GM10248 (cell line): ENCODE measurements at regions of chr3 and their contacts with region 1.

Region 1: GRCh38 chr3:49839193-49839809 is 17.1 kb downstream of the TRAIP start:
- DNase-seq: peak; percentile 82
- CTCF ChIP-seq: peak; percentile 92

Region 2: GRCh38 chr3:49703443-49703927 is 135.8 kb before region 1 on chr3:
- CTCF ChIA-PET with region 1: interaction called, 23 read pairs
- POLR2A ChIA-PET with region 1: no interaction called
- DNase-seq: peak; percentile 90
- CTCF ChIP-seq: peak; percentile 85

Region 3: DNA sequence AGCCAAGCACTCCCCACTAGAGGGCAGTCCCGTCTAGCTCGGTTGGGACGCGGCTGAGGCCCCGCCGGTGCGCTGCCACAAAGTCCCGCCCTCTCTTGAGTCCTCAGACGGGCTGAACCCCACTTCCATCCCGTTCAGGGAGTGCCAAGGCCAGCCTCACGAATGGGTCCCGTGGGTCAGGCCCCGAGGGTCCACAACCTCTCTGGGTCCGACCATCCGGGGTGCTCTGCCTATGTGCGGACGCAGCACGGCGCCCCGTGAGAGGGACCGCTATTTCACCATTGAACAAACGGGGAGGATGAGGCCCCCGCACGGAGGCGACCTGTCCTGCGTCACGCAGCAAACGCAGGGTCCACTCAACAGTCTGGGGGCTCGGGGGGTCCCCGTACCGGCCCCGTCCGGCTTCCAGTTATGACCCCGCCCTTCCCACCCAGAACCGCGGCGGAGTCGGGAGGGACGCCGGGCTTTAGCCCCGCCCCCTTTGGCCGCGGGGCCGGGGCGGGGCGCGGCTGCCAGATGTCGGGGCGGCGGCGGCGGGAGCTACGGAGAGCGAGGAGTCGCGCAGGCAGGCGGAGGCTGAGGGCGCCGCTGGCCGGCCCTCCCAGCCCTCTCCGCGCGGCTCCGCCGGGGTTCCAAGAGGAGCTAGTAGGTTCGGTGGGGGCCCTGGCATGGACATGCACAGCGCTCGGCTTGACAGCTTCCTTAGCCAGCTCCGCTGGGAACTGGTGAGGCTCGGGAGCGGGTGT is 36.4 kb before region 1 on chr3 and contains the start of gene INKA1:
- CTCF ChIA-PET with region 1: interaction called, 558 read pairs
- POLR2A ChIA-PET with region 1: interaction called, 3 read pairs
- DNase-seq: peak; percentile 92
- CTCF ChIP-seq: peak; percentile 88

Region 4: DNA sequence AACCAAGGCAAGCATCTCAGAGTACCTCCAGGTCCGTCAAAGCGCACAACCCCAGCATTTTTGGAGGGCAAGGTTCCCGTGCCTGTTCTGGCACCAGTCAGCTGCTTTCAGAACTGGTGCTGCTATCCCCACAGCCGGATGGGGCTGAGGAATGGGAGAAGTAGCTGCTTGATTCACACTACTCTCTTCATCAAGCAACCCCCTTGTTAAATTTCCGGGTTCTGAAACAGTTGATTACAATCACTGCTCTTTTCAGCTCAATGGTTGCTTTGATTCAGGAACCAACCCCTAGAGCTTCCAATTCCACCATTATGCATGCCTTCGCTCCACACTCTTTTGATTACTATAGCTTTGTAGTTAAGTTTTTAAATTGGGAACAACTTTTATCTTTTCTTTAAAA is 13.3 kb before region 1 on chr3:
- CTCF ChIA-PET with region 1: interaction called, 48 read pairs
- POLR2A ChIA-PET with region 1: no interaction called
- DNase-seq: no peak
- CTCF ChIP-seq: no peak

Region 5: GRCh38 chr3:49877716-49878115 is 38.4 kb after region 1 on chr3:
- CTCF ChIA-PET with region 1: interaction called, 16 read pairs
- POLR2A ChIA-PET with region 1: no interaction called
- DNase-seq: no peak
- CTCF ChIP-seq: no peak